ENCODE measurements at regions of chr1 and their contacts with region 1.

Region 1: GRCh38 chr1:67748630-67749029 is 63.6 kb downstream of the GADD45A start:
- DNase-seq: no peak
- ATAC-seq: no peak
- H3K4me3 ChIP-seq: peak overlapping the region in 1 of 2 experiments; percentile 46; a peak in 2 of 4 replicates
- H3K27ac ChIP-seq: peak overlapping the region; percentile 84; the same call in 1 of the 2 replicates
- H3K4me1 ChIP-seq: peaks cover 54 to 66% of the 10 kb centered on the region in 2 experiments
- H3K27me3 ChIP-seq: no peaks in the 10 kb centered on the region
- CTCF ChIP-seq: no peak
- POLR2A ChIP-seq: no peak
- RAD21 ChIP-seq: no peak

Region 2: GRCh38 chr1:67418839-67419586 is 329.6 kb before region 1 on chr1:
- CTCF ChIA-PET with region 1: no interaction called
- POLR2A ChIA-PET with region 1: no interaction called
- RAD21 ChIA-PET with region 1: no interaction called
- intact Hi-C with region 1: no loop called
- DNase-seq: no peak
- ATAC-seq: no peak
- H3K4me3 ChIP-seq: no peak overlapping the region
- H3K27ac ChIP-seq: no peak overlapping the region
- H3K4me1 ChIP-seq: no peaks in the 10 kb centered on the region
- H3K27me3 ChIP-seq: no peaks in the 10 kb centered on the region
- CTCF ChIP-seq: no peak
- POLR2A ChIP-seq: no peak
- RAD21 ChIP-seq: no peak

Region 3: DNA sequence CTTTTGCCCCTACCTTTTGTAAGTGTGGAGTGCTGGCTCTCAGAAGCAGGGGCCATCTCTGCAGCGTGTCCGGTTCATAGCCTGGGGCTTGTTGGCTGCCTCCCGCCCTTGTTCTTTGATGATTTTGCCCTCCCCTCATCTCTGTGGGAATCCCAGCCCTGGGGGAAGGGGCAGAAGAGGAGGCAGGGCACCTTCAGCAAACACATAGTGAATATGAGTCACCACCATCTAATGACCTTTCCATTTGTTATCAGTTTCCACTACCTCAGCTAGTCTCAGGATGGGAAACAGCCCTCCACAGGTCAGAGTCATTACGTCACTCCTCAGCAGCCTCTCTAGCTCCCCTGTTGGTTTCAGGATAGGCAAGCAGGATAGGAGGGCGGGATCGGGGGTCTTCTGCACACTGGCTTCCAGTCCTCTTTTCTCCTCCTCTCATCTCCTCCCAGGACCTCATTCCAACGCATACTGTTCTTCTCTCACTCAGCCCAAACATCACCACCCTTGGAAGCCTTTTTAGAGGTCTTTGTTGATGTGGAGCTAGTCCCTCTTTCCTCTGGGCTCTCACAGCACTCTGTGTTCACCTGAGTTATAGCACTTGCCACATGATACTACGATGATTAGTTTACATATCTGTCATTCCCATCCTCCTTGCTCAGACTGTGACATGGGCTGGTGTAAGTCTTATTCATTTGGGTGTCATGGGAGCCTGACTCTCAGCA is 47.8 kb before region 1 on chr1:
- CTCF ChIA-PET with region 1: interaction called, 6 read pairs
- POLR2A ChIA-PET with region 1: no interaction called
- RAD21 ChIA-PET with region 1: interaction called in 1 of 2 experiments, 4 read pairs
- intact Hi-C with region 1: loop called (anchors 1 kb)
- DNase-seq: peak; percentile 93
- ATAC-seq: peak; percentile 86
- H3K4me3 ChIP-seq: peak overlapping the region in 1 of 2 experiments; percentile 15; a peak in 2 of 4 replicates
- H3K27ac ChIP-seq: peak overlapping the region; percentile 82
- H3K4me1 ChIP-seq: peaks cover 33 to 37% of the 10 kb centered on the region in 2 experiments
- H3K27me3 ChIP-seq: no peaks in the 10 kb centered on the region
- CTCF ChIP-seq: peak in 2 of 3 experiments; percentile 49 to 54; a peak in 4 of 6 replicates
- POLR2A ChIP-seq: no peak
- RAD21 ChIP-seq: peak; percentile 21; the same call in 1 of the 2 replicates

Region 4: GRCh38 chr1:67897270-67897949 is 148.8 kb after region 1 on chr1:
- CTCF ChIA-PET with region 1: no interaction called
- POLR2A ChIA-PET with region 1: no interaction called
- RAD21 ChIA-PET with region 1: no interaction called
- intact Hi-C with region 1: no loop called
- DNase-seq: no peak
- ATAC-seq: no peak
- H3K4me3 ChIP-seq: no peak overlapping the region
- H3K27ac ChIP-seq: no peak overlapping the region
- H3K4me1 ChIP-seq: no peaks in the 10 kb centered on the region
- H3K27me3 ChIP-seq: no peaks in the 10 kb centered on the region
- CTCF ChIP-seq: no peak
- POLR2A ChIP-seq: no peak
- RAD21 ChIP-seq: no peak

Region 5: GRCh38 chr1:68065766-68066165 is 317.1 kb after region 1 on chr1:
- CTCF ChIA-PET with region 1: no interaction called
- POLR2A ChIA-PET with region 1: no interaction called
- RAD21 ChIA-PET with region 1: no interaction called
- intact Hi-C with region 1: no loop called
- DNase-seq: no peak
- ATAC-seq: no peak
- H3K4me3 ChIP-seq: no peak overlapping the region
- H3K27ac ChIP-seq: no peak overlapping the region
- H3K4me1 ChIP-seq: peaks cover 2 to 10% of the 10 kb centered on the region in 2 experiments; a peak in 3 of 4 replicates
- H3K27me3 ChIP-seq: no peaks in the 10 kb centered on the region
- CTCF ChIP-seq: no peak
- POLR2A ChIP-seq: no peak
- RAD21 ChIP-seq: no peak